GM12878 (cell line): ENCODE measurements at regions of chr3 and their contacts with region 1.

Region 1: DNA sequence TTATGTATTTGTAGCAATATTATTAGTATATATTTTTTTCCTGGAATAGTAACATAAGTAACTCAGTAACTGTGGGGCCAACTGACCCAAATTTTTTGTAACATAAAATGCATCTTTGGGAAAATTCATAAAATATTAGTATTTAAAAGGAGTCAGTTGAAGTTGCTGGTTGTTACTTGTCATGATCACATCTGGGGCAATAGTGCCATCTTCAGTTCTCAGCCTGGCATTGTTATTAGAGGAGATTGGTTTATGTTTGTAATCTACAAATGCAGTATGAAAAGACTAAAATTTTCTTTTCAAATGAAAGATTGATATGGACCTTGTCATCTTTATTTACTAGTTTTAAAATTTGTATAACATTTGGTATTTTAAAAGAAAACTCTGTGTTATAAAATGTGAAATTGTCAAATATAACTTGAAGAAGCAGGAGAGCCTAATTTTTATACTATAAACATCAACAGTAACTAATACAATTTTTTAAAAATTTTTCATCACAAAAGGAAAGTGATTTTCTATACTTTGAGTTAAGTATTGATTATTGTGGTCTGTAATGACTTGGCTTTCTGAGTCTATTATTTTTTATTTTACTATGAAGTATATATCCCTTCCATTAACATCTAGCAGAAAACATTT is 38.8 kb upstream of the MLF1 start:
- DNase-seq: no peak
- ATAC-seq: peak; percentile 62; the same call in 2 of the 3 replicates
- H3K4me3 ChIP-seq: no peak overlapping the region
- H3K27ac ChIP-seq: no peak overlapping the region
- H3K4me1 ChIP-seq: no peaks in the 10 kb centered on the region
- H3K27me3 ChIP-seq: no peaks in the 10 kb centered on the region
- CTCF ChIP-seq: peak; percentile 48 to 60 (median 49)
- EP300 ChIP-seq: no peak
- POLR2A ChIP-seq: no peak
- RAD21 ChIP-seq: peak; percentile 82

Region 2: DNA sequence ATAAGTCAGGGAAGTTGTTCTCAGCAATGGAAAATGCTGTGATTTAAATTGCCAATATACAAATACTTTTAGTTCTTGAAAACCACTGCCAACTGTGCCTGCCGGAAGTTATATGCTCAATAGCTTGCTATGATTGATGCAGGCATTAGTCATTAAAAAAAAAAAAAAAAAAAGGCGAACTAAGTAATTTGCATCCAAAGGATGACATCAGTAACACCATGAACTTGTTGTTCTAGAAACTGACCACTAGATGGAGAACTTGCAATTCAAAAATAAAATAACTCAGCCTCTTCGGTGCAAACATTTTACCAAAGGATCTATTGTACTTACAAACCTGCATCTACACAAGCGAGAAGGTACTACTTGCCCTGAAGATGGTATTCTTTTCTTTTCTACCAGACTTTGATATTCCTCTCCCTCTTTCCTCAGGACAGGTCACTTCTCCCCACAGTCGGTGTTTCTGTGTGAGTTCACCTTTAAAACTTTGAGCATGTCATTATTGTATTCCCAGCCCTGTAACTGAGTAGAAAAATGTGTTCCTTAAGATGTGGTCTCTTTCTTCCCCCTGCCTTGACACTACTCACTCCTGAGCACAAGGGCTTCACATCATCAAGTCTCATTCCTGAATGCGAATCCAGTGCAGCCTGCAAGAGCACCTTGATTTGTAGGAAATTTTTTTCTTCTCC is 914.0 kb before region 1 on chr3:
- CTCF ChIA-PET with region 1: interaction called, 3 read pairs
- POLR2A ChIA-PET with region 1: no interaction called
- RAD21 ChIA-PET with region 1: interaction called, 3 read pairs
- SMC1A ChIA-PET with region 1: interaction called, 3 read pairs
- in situ Hi-C with region 1: no loop called
- intact Hi-C with region 1: loop called (anchors 1 kb)
- DNase-seq: peak; percentile 12
- ATAC-seq: peak; percentile 90
- H3K4me3 ChIP-seq: no peak overlapping the region
- H3K27ac ChIP-seq: no peak overlapping the region
- H3K4me1 ChIP-seq: no peaks in the 10 kb centered on the region
- H3K27me3 ChIP-seq: no peaks in the 10 kb centered on the region
- CTCF ChIP-seq: peak; percentile 55 to 62 (median 56); a peak in 5 of 6 replicates
- EP300 ChIP-seq: no peak
- POLR2A ChIP-seq: no peak
- RAD21 ChIP-seq: peak; percentile 68

Region 3: GRCh38 chr3:158443632-158444031 is 88.6 kb before region 1 on chr3:
- CTCF ChIA-PET with region 1: interaction called, 7 read pairs
- POLR2A ChIA-PET with region 1: no interaction called
- RAD21 ChIA-PET with region 1: no interaction called
- SMC1A ChIA-PET with region 1: interaction called, 3 read pairs
- in situ Hi-C with region 1: no loop called
- intact Hi-C with region 1: loop called (anchors 5 kb)
- DNase-seq: peak; percentile 43
- ATAC-seq: peak; percentile 96
- H3K4me3 ChIP-seq: no peak overlapping the region
- H3K27ac ChIP-seq: no peak overlapping the region
- H3K4me1 ChIP-seq: peaks cover 4% of the 10 kb centered on the region; the same call in 1 of the 2 replicates
- H3K27me3 ChIP-seq: no peaks in the 10 kb centered on the region
- CTCF ChIP-seq: no peak
- EP300 ChIP-seq: no peak
- POLR2A ChIP-seq: no peak
- RAD21 ChIP-seq: no peak

Region 4: DNA sequence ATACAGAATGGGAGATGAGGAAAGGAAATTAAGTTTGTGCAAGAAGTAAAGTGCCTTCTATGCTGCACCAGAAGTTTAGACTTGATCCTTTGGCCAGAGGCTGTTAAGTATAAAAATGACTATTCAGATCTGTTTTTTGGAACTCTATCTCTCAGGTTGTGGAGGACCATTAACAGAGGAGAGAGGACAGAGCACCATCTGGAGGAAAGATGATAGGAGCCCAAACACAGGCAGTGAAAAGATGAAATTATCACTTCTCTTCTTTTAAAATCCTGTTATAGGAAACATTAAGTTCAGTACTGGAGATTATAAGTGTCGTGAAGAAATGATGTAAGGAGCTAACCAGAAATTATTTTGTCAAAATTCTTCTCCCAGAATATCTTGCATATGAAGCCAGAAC is 971.7 kb after region 1 on chr3:
- CTCF ChIA-PET with region 1: no interaction called
- POLR2A ChIA-PET with region 1: no interaction called
- RAD21 ChIA-PET with region 1: no interaction called
- SMC1A ChIA-PET with region 1: no interaction called
- in situ Hi-C with region 1: no loop called
- intact Hi-C with region 1: no loop called
- DNase-seq: no peak
- ATAC-seq: no peak
- H3K4me3 ChIP-seq: no peak overlapping the region
- H3K27ac ChIP-seq: no peak overlapping the region
- H3K4me1 ChIP-seq: no peaks in the 10 kb centered on the region
- H3K27me3 ChIP-seq: no peaks in the 10 kb centered on the region
- CTCF ChIP-seq: no peak
- EP300 ChIP-seq: no peak
- POLR2A ChIP-seq: no peak
- RAD21 ChIP-seq: no peak